ENCODE measurements at regions of chr7 and their contacts with region 1.

Region 1: DNA sequence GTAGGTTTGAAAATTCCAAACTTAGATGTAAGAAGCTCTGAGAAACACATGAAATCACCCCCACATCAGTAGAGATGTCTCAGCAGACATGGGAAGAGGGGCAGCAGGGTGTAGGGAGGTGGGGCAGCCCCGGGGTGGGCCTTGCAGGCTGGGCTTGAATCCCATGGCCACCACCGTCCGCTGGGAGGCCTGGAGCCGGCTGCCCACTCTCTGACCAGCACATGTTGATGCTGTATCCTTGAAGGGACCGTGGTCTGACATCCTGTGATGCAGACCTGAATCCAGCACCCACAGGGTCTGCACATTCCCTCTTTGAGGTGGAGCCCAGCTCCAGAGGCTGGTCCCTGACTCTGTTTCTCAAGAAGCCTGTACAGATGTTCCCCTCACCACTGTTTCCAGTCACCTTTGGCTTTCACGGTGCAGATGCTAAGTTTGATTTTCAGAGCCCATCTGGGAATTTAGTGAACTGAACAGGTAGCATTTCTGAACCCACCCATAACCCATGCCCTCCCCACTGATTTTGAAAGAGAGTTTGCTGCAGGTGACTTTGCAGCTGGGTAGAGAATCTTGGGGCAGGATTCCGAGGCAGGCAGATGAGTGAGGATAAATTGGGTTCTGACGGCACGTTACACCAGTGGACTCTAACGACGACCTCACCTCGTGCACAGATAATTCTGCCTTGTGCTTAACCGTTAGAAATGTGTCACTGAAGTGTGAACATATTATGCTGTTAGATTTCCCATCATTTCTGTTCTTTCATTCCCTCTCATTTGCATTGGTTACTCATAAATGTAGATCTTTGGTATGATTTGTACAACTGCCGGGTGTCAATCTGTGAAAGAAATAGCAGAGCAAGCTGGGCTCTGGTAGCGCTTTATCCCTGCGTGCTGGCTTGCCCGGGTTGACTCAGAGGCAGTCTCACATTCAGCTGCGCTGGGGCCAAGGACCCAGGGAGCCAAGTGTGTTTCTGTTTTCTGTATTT is 45.7 kb downstream of the IKZF1 start:
- DNase-seq: peak; percentile 47 to 84 (median 75)
- ATAC-seq: peak; percentile 63
- H3K4me3 ChIP-seq: peak overlapping the region; percentile 23
- H3K4me3 Mint-ChIP-seq: peak overlapping the region; percentile 52
- H3K27ac ChIP-seq: peak overlapping the region; percentile 86 to 95
- H3K27ac Mint-ChIP-seq: no peak overlapping the region
- H3K4me1 ChIP-seq: peaks cover 92% of the 10 kb centered on the region
- H3K4me1 Mint-ChIP-seq: peaks cover 98% of the 10 kb centered on the region
- H3K27me3 ChIP-seq: no peaks in the 10 kb centered on the region
- H3K27me3 Mint-ChIP-seq: no peaks in the 10 kb centered on the region
- CTCF ChIP-seq: no peak

Region 2: GRCh38 chr7:50335795-50336754 is 14.2 kb before region 1 on chr7:
- CTCF ChIA-PET with region 1: interaction called, 9 read pairs
- POLR2A ChIA-PET with region 1: interaction called, 2,111 read pairs
- intact Hi-C with region 1: loop called in 1 of 2 experiments (anchors 1 kb)
- DNase-seq: peak in 13 of 14 experiments; percentile 73 to 91 (median 85)
- ATAC-seq: peak; percentile 50
- H3K4me3 ChIP-seq: peak overlapping the region; percentile 24
- H3K4me3 Mint-ChIP-seq: no peak overlapping the region
- H3K27ac ChIP-seq: peak overlapping the region; percentile 87 to 91
- H3K27ac Mint-ChIP-seq: no peak overlapping the region
- H3K4me1 ChIP-seq: peaks cover 94% of the 10 kb centered on the region
- H3K4me1 Mint-ChIP-seq: peaks cover 14% of the 10 kb centered on the region
- H3K27me3 ChIP-seq: no peaks in the 10 kb centered on the region
- H3K27me3 Mint-ChIP-seq: no peaks in the 10 kb centered on the region
- CTCF ChIP-seq: no peak

Region 3: GRCh38 chr7:50359995-50360925 is 10.0 kb after region 1 on chr7:
- CTCF ChIA-PET with region 1: interaction called, 5 read pairs
- POLR2A ChIA-PET with region 1: interaction called, 962 read pairs
- intact Hi-C with region 1: loop called (anchors 1 to 2 kb)
- DNase-seq: peak; percentile 71 to 96 (median 79)
- ATAC-seq: peak; percentile 86
- H3K4me3 ChIP-seq: peak overlapping the region; percentile 17
- H3K4me3 Mint-ChIP-seq: peak overlapping the region; percentile 76
- H3K27ac ChIP-seq: peak overlapping the region; percentile 86 to 96
- H3K27ac Mint-ChIP-seq: no peak overlapping the region
- H3K4me1 ChIP-seq: peaks cover 96% of the 10 kb centered on the region
- H3K4me1 Mint-ChIP-seq: peaks cover 96% of the 10 kb centered on the region
- H3K27me3 ChIP-seq: no peaks in the 10 kb centered on the region
- H3K27me3 Mint-ChIP-seq: no peaks in the 10 kb centered on the region
- CTCF ChIP-seq: no peak

Measured in CD4-positive, alpha-beta T cell (primary cell).